Activated T-helper 1 cell treated with anti-CD3 and anti-CD28 coated beads, Interleukin-12 subunit alpha, Interleukin-12 subunit beta, Interleukin-2, Interleukin-4 antibody, amounts not matched to agents 30 ng/mL and 10 ng/mL and 1 ng/mL, durations not matched to agents 14 hours and 24 hours and 36 hours (primary cell): ENCODE measurements at regions of chr2 and their contacts with region 1.

Region 1: DNA sequence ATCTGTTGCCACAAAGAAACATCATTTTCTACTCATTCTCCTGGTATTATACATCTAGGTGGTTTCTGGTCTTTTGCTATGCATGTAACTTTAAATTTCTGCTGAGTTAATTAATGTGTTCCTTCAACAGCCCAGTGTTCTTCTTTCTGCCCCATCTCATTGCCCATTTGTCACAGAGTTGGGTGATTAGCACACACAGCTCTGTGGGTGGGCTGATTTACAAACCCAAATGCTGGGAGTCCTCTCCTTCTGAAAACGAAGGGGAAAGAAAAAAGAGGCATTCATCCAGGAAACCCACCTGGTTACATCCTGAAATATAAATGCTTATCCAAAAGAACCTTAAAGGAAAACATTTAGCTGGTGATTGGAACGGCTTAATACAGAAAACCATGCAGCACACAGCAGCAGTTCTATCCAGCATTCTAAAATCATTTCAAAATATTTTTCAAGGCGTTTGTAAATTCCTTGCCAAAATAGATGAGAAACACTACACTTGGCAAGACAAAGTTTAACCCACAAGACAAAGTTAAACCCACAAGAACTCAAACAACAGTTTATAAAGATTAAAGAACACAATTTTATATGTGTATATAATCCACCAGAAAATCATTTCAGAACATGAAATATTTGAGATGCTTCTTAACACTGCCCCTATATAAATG is 177.9 kb downstream of the ANTXR1 start:
- DNase-seq: no peak
- H3K4me3 Mint-ChIP-seq: no peak overlapping the region
- H3K27ac Mint-ChIP-seq: no peak overlapping the region
- H3K4me1 Mint-ChIP-seq: no peaks in the 10 kb centered on the region
- H3K27me3 Mint-ChIP-seq: peaks cover 26% of the 10 kb centered on the region

Region 2: DNA sequence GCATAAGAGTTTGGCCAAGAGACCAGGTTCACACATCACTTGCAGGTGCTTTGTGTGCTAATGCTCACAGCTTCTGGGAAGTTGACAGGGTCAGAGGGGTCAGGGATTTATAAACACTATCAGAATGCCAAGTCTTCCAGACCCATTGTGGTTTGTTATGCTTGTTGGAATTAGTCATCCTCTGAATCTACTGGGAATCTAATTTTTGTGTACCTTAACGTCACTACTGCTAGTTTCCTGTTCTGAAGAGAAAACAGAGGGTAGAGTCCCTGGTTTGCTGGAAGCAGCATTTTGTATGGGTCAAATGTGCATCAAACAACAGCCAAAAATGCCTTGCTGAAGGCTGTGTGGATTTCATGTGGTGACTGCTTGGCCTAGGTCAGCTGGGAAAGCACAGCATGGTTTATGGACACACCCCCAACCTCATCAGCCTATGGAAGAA is 144.6 kb before region 1 on chr2:
- intact Hi-C with region 1: no loop called
- DNase-seq: no peak
- H3K4me3 Mint-ChIP-seq: no peak overlapping the region
- H3K27ac Mint-ChIP-seq: no peak overlapping the region
- H3K4me1 Mint-ChIP-seq: no peaks in the 10 kb centered on the region
- H3K27me3 Mint-ChIP-seq: peaks cover 45% of the 10 kb centered on the region

Region 3: DNA sequence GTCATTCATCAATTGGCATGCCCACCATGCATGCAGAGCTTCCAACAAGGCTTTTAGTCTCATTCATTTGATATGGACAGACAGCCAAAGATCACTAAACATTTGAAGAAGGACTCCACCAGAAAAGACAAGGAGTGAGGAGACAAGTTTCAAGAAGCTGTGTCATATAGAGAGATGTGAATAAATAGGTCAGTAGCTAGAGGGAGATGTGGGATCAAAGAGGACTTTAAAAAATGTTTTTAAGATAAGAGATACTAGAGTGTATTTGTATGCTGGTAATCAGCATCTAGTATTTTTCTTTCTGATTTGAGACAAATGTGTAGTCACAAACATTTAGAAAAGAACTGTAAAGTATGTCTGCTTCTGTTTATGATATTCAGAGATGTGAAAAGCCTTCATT is 129.3 kb before region 1 on chr2:
- intact Hi-C with region 1: no loop called
- DNase-seq: no peak
- H3K4me3 Mint-ChIP-seq: no peak overlapping the region
- H3K27ac Mint-ChIP-seq: no peak overlapping the region
- H3K4me1 Mint-ChIP-seq: no peaks in the 10 kb centered on the region
- H3K27me3 Mint-ChIP-seq: peaks cover 53% of the 10 kb centered on the region

Region 4: GRCh38 chr2:69168950-69169654 is 21.8 kb before region 1 on chr2:
- intact Hi-C with region 1: loop called (anchors 1 kb)
- DNase-seq: no peak
- H3K4me3 Mint-ChIP-seq: no peak overlapping the region
- H3K27ac Mint-ChIP-seq: no peak overlapping the region
- H3K4me1 Mint-ChIP-seq: no peaks in the 10 kb centered on the region
- H3K27me3 Mint-ChIP-seq: peaks cover 18% of the 10 kb centered on the region

Region 5: GRCh38 chr2:69559442-69560146 is 368.7 kb after region 1 on chr2:
- intact Hi-C with region 1: no loop called
- DNase-seq: no peak
- H3K4me3 Mint-ChIP-seq: no peak overlapping the region
- H3K27ac Mint-ChIP-seq: peak overlapping the region; percentile 59
- H3K4me1 Mint-ChIP-seq: peaks cover 52% of the 10 kb centered on the region
- H3K27me3 Mint-ChIP-seq: no peaks in the 10 kb centered on the region